Testis (tissue), 5 donors: ENCODE measurements at regions of chr17 and their contacts with region 1.

Region 1: GRCh38 chr17:55110521-55110920 is 142.0 kb downstream of the STXBP4 start:
- DNase-seq: no peak
- H3K4me3 ChIP-seq: no peak overlapping the region
- H3K27ac ChIP-seq: no peak overlapping the region
- H3K4me1 ChIP-seq: no peaks in the 10 kb centered on the region
- H3K27me3 ChIP-seq: no peaks in the 10 kb centered on the region
- CTCF ChIP-seq: no peak
- POLR2A ChIP-seq: no peak

Region 2: GRCh38 chr17:55090079-55090492 is 20.4 kb before region 1 on chr17:
- intact Hi-C with region 1: loop called (anchors 2 kb)
- DNase-seq: no peak
- H3K4me3 ChIP-seq: no peak overlapping the region
- H3K27ac ChIP-seq: no peak overlapping the region
- H3K4me1 ChIP-seq: no peaks in the 10 kb centered on the region
- H3K27me3 ChIP-seq: no peaks in the 10 kb centered on the region
- CTCF ChIP-seq: no peak
- POLR2A ChIP-seq: no peak